ENCODE measurements at regions of chr2 and their contacts with region 1.

Region 1: GRCh38 chr2:101762451-101763171 is 65.1 kb downstream of the MAP4K4 start:
- DNase-seq: no peak
- ATAC-seq: peak; percentile 23
- H3K4me3 ChIP-seq: peak overlapping the region in 1 of 3 experiments; percentile 11; a peak in 1 of 6 replicates
- H3K27ac ChIP-seq: peak overlapping the region; percentile 44
- H3K4me1 ChIP-seq: peaks cover 87% of the 10 kb centered on the region
- H3K27me3 ChIP-seq: no peaks in the 10 kb centered on the region
- CTCF ChIP-seq: no peak
- EP300 ChIP-seq: no peak
- POLR2A ChIP-seq: 0 out of 4 replicates have a peak, but pooled peaks of 1 of the 2 experiments have one; percentile 3
- RAD21 ChIP-seq: no peak

Region 2: DNA sequence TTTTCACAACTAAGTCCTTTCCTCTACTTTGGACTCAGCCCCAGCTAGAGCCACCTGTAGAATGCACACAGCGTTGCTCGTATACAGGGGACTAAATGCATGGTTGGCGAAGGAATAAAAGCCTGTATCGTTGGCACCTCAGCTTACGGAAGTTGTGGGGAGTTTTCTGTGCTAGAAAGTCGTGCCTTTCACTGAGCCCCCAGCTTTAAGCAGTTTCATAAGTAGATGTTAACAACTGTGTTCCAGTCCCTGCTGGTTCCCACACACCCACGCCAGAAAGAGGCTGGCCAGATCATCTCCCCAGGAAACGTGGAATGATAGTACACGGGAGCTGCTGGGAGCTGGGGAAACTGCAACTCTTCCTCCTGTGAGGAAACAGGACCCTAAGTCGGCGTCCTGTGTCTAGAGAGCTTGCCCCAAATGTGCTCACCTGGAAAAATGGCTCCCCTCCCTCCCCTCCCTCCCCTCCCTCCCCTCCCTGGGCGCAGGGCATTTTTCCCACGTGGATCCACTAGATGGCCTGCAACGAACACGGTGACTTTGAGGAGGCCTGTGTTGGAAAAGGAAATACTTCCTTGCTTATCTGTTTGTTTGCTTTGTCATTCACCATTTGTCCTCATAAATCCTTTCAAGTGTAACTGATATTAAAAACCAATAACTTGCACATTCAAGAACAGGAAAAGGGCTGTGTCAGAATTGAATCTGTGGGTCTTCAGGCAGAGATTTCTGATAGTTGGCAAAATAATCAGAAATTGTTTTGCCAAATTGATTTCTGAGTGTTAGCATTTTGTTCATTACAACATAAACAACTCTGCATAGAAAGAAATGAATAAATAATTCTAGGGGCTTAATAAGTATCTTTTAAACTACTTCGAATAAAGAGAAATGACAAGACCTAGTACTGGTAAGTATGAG is 243.8 kb before region 1 on chr2:
- CTCF ChIA-PET with region 1: no interaction called
- POLR2A ChIA-PET with region 1: no interaction called
- in situ Hi-C with region 1: no loop called
- intact Hi-C with region 1: loop called (anchors 5 kb)
- DNase-seq: peak; percentile 78
- ATAC-seq: peak; percentile 87
- H3K4me3 ChIP-seq: peak overlapping the region; percentile 23 to 51 (median 25); a peak in 5 of 6 replicates
- H3K27ac ChIP-seq: no peak overlapping the region
- H3K4me1 ChIP-seq: peaks cover 51% of the 10 kb centered on the region
- H3K27me3 ChIP-seq: no peaks in the 10 kb centered on the region
- CTCF ChIP-seq: peak; percentile 82
- EP300 ChIP-seq: no peak; a peak in 1 of 4 replicates
- POLR2A ChIP-seq: no peak
- RAD21 ChIP-seq: peak; percentile 49

Region 3: GRCh38 chr2:101733257-101733993 is 29.2 kb before region 1 on chr2:
- CTCF ChIA-PET with region 1: no interaction called
- POLR2A ChIA-PET with region 1: interaction called, 21 read pairs
- in situ Hi-C with region 1: no loop called
- intact Hi-C with region 1: loop called (anchors 2 kb)
- DNase-seq: peak; percentile 94
- ATAC-seq: peak; percentile 89
- H3K4me3 ChIP-seq: peak overlapping the region in 1 of 3 experiments; percentile 55; a peak in 2 of 6 replicates
- H3K27ac ChIP-seq: peak overlapping the region; percentile 90
- H3K4me1 ChIP-seq: peaks cover 100% of the 10 kb centered on the region
- H3K27me3 ChIP-seq: no peaks in the 10 kb centered on the region
- CTCF ChIP-seq: peak; percentile 23; the same call in 1 of the 2 replicates
- EP300 ChIP-seq: peak in 1 of 2 experiments; percentile 84; a peak in 3 of 4 replicates
- POLR2A ChIP-seq: peak; percentile 69 to 84; a peak in 3 of 4 replicates
- RAD21 ChIP-seq: peak; percentile 74

Region 4: GRCh38 chr2:101787097-101787496 is 24.5 kb after region 1 on chr2:
- CTCF ChIA-PET with region 1: no interaction called
- POLR2A ChIA-PET with region 1: no interaction called
- in situ Hi-C with region 1: no loop called
- intact Hi-C with region 1: no loop called
- DNase-seq: no peak
- ATAC-seq: no peak
- H3K4me3 ChIP-seq: no peak overlapping the region
- H3K27ac ChIP-seq: no peak overlapping the region
- H3K4me1 ChIP-seq: peaks cover 64% of the 10 kb centered on the region
- H3K27me3 ChIP-seq: no peaks in the 10 kb centered on the region
- CTCF ChIP-seq: no peak
- EP300 ChIP-seq: no peak
- POLR2A ChIP-seq: no peak
- RAD21 ChIP-seq: no peak

Measured in HepG2 (cell line).